ENCODE measurements at regions of chr16 and their contacts with region 1.

Region 1: DNA sequence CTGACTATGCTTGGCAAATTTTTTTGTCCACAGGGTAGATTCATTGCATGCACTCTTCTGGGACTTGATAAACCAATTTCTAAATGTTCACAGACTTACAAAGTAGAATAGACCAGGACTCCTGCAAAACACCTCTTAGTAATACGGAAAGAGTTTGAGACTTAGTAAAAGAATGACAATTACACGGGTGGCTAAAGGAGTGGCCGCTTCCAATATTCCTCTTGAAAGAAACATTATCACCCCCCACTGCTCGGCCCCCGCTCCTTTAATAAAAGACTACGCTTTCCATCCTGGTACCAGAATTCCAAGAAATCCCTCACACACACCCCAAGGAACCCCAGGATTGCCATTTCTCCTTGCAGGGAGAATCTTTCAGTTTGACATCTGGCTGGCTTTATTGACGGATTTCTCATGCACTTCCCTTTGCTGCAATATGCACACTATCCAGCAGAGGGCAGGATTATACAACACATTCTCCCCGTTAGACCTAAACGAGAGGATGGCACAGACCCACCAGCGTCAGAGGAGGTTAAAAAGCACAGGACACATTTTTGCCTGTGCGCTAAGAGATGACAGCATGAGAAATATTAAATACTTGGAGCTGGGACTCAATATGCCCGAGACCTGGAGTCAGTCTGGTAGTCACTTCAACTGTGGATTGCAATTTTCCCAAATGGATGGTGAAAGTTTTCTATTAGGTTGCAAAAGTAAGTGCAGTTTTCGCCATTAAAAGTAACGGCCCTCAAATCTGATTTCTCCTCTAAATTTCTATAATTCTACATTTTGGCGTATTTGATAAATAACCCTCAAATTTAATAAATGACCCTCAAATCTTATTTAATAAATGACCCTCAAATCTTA is 46.6 kb upstream of the NUDT7 start:
- DNase-seq: peak in 4 of 5 donors; percentile 43 to 65 (median 52)
- ATAC-seq: peak in 3 of 4 donors; percentile 85 to 92 (median 87)
- H3K4me3 ChIP-seq: no peak overlapping the region
- H3K27ac ChIP-seq: no peak overlapping the region
- H3K4me1 ChIP-seq: peaks cover 0 to 3% (median 0%) of the 10 kb centered on the region in 12 donors
- H3K27me3 ChIP-seq: peaks cover 0 to 4% (median 0%) of the 10 kb centered on the region in 9 donors
- CTCF ChIP-seq: peak; percentile 74 to 93 (median 86)
- POLR2A ChIP-seq: no peak

Region 2: DNA sequence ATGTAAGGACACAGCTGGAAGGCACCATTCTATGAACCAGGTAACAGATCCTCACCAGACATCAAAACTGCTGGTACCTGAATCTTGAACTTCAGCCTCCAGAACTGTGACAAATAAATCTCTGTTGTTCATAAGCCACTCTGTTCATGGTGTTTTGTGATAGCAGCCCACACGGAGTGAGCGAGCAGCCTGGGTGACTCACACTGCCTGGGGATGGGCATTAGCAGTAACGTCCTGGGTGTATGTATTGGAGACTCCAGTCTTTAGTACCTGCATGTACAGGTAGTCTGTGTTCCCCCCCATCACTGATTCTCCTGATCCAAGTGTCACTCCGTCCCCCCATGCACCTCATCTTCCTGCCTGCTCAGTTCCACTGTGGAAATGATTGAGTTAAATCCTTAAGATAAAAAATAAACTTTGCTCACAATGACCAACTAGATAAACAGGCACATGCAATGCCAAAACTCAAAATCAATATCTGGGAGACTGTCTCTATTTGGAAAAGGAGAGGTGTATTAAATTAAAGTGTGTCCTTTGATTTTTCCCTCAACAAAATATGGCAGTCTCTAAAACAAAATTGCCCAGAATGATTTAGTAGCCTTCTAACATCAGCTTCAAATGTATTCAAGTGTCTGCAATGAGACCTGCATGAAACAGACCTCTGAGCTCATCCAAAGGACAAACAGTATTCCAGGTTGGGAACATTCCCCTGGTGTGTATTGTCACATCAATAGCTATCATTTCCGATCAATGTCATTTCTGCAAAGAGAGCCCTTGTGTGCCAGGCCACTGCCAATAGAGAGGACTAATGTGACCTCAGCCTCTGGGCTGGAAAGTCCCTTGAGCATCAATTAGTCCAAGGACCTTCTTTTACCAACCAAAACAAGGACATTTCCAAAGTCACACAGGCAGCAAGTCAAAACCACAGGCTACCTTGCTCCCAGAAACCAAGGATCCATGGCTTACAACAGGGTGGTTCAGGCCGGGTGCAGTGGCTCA is 100.5 kb after region 1 on chr16:
- intact Hi-C with region 1: loop called in 2 of 10 experiments (anchors 5 to 10 kb)
- DNase-seq: no peak
- ATAC-seq: no peak
- H3K4me3 ChIP-seq: no peak overlapping the region
- H3K27ac ChIP-seq: no peak overlapping the region
- H3K4me1 ChIP-seq: no peaks in the 10 kb centered on the region
- H3K27me3 ChIP-seq: no peaks in the 10 kb centered on the region
- CTCF ChIP-seq: no peak
- POLR2A ChIP-seq: no peak

Region 3: DNA sequence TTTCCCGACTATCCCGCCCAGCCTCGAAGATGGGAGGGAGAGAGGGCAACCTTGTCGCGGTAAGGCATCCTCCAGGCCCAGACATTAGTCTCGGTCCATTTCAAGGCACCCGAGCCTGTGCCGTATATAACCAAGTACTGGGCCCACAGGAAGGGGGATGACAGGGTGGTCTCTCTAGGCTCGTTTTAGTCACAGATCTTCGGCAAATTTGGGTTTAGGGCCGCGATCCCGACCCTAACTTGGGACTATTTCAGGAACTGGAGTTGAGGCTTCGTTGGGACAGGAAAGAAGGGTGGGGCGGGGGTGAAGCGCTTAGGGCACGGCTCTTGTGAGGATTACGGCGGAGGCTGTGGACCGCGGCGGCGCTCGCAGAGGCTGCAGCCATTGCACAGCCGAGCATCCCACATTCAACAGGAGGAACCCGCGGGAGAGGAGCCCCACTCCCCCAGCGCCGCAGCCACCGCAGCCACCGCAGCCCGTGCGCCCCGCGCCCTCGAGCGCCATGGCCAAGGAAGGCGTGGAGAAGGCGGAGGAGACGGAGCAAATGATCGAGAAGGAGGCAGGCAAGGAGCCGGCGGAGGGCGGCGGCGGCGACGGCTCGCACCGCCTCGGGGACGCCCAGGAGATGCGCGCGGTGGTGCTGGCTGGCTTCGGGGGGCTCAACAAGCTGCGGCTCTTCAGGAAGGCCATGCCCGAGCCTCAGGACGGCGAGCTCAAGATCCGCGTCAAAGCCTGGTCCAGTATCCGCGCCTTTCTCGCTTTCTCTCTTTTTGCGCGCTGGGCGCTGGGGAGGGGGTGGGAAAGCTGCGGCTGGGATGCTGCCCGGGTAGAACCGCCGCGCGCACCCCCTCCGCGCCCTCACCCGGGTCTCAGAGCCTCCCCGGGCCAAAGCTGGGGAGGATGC is 112.7 kb after region 1 on chr16 and contains the start of gene VAT1L:
- intact Hi-C with region 1: loop called in 1 of 10 experiments (anchors 10 kb)
- DNase-seq: peak in 3 of 5 donors; percentile 32 to 34 (median 33)
- ATAC-seq: peak; percentile 52 to 94 (median 88)
- H3K4me3 ChIP-seq: peak within 1 kb of the TSS; percentile 47 to 78 (median 62)
- H3K27ac ChIP-seq: peak within 1 kb of the TSS in 2 of 12 donors; percentile 9 to 22
- H3K4me1 ChIP-seq: peaks cover 0 to 25% (median 7%) of the 10 kb centered on the region in 12 donors
- H3K27me3 ChIP-seq: peaks cover 6 to 66% (median 13%) of the 10 kb centered on the region in 9 donors
- CTCF ChIP-seq: no peak
- POLR2A ChIP-seq: no peak
- total RNA-seq, gene VAT1L: 2.9 to 57.5 (median 14.3) TPM

Region 4: DNA sequence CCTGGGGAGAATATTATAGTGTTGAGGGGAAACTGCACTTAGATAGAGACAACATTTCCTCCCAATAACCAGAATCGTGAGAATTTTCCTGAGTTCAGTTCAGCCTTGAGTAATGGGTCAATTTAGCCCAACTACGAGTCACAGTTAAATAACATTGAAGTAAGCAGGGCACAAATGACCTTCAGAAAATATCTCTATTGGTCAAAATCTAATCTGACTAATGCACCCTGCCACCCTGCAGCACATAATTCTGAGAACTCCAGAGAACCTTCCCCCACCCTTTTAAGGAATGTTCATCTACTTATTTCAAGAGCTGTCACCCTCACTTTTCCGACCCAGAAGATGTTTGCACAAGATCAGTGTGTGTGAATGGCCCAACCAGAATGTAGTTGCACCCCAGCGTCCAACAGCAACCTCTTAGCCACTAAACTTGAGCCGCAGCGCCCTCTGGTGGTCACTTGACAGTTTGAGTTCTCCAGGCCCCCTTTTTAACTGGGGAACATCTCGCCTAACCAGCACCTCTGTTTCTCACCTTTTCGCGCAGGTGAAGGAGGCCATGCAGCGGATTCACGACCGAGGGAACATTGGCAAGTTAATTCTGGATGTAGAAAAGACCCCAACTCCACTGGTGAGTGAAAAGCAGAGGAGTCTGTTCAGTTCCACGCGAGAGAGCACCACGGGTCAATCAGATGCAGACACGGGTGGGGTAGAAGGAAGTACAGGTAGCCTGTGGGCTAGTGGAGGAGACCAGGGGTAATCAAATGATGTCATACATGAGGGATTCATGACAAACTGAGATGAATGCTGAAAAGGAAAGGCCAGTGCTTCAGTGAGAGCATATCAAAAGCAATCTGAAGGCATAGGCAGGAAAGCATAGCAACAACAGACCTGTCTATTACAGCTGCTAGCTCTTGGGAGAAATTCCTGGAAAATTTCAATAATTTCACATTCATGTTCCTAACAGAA is 295.9 kb after region 1 on chr16:
- intact Hi-C with region 1: loop called (anchors 1 to 2 kb)
- DNase-seq: peak; percentile 71 to 85 (median 81)
- ATAC-seq: peak in 3 of 4 donors; percentile 87 to 93 (median 88)
- H3K4me3 ChIP-seq: no peak overlapping the region
- H3K27ac ChIP-seq: peak overlapping the region in 1 of 12 donors; percentile 29
- H3K4me1 ChIP-seq: peaks cover 0 to 4% (median 0%) of the 10 kb centered on the region in 12 donors
- H3K27me3 ChIP-seq: peaks cover 0 to 5% (median 0%) of the 10 kb centered on the region in 9 donors
- CTCF ChIP-seq: peak; percentile 58 to 83 (median 78)
- POLR2A ChIP-seq: no peak

Region 5: GRCh38 chr16:78002915-78003538 is 327.3 kb after region 1 on chr16:
- intact Hi-C with region 1: loop called in 7 of 10 experiments (anchors 1 to 10 kb)
- DNase-seq: peak; percentile 74 to 90 (median 84)
- ATAC-seq: peak; percentile 70 to 98 (median 93)
- H3K4me3 ChIP-seq: no peak overlapping the region
- H3K27ac ChIP-seq: no peak overlapping the region
- H3K4me1 ChIP-seq: peaks cover 0 to 2% (median 0%) of the 10 kb centered on the region in 12 donors
- H3K27me3 ChIP-seq: no peaks in the 10 kb centered on the region
- CTCF ChIP-seq: peak; percentile 68 to 91 (median 83)
- POLR2A ChIP-seq: no peak

Region 6: GRCh38 chr16:78099372-78100161 is 423.9 kb after region 1 on chr16 and contains the start of gene WWOX:
- intact Hi-C with region 1: loop called in 5 of 10 experiments (anchors 5 to 10 kb)
- DNase-seq: peak; percentile 95 to 98 (median 97)
- ATAC-seq: peak; percentile 96 to 98 (median 98)
- H3K4me3 ChIP-seq: peak within 1 kb of the TSS; percentile 71 to 100 (median 90)
- H3K27ac ChIP-seq: peak within 1 kb of the TSS; percentile 60 to 94 (median 87)
- H3K4me1 ChIP-seq: peaks cover 0 to 17% (median 8%) of the 10 kb centered on the region in 12 donors
- H3K27me3 ChIP-seq: peaks cover 0 to 5% (median 0%) of the 10 kb centered on the region in 9 donors
- CTCF ChIP-seq: peak; percentile 69 to 90 (median 82)
- POLR2A ChIP-seq: peak in 1 of 2 donors; percentile 81
- total RNA-seq, gene WWOX: 4.3 to 18.3 (median 10.1) TPM

Measured in heart left ventricle (tissue), 16 donors.